ENCODE measurements at regions of chr2 and their contacts with region 1.

Region 1: DNA sequence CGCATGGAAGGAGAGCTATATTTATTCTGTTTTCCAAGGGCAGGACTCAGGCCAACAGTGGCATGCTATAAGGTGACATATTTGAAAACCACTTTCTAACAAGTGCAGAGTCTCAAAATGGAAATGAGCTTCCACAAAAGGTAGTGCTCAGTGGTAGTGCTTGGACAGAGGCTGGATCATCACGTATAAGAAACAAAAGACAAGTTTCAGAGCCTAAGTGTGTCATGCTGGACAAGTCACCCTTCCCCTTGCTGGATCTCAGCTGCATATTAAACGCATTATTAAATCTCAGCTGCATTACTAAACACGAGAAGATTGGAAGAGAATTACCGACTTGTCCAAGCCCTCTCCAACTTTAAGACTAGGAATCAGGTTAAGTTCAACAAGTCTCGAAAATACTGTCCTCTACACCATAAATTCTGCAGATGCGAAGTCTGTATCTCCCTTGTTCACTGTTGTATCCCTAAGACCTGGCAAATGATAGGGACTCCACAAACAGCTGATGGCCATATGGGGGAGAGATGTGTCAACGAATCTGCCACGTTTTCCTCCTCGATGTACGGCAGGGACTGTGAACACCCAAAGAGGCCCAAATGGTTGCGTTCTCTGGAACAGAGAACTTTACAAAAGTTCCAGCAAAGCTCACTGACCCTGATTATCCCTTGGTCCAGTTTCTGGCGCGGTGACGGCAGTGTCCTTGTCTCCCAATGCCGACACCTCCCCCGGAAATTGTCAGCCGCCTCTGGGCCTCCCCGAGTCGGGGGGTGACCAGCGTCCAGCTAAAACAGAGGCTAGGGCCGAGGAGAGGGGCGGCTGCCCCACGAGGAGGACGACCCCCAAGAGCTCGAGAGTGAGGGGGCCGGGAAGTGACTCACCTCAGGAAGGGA is 611 bp downstream of the NOL10 start:
- DNase-seq: no peak
- ATAC-seq: peak; percentile 19
- H3K4me3 Mint-ChIP-seq: no peak overlapping the region
- H3K27ac Mint-ChIP-seq: no peak overlapping the region
- H3K4me1 Mint-ChIP-seq: peaks cover 7% of the 10 kb centered on the region
- H3K27me3 Mint-ChIP-seq: no peaks in the 10 kb centered on the region

Region 2: GRCh38 chr2:10750610-10751009 is 61.4 kb after region 1 on chr2:
- CTCF ChIA-PET with region 1: no interaction called
- POLR2A ChIA-PET with region 1: no interaction called
- intact Hi-C with region 1: loop called in 1 of 2 experiments (anchors 1 kb)
- DNase-seq: no peak
- ATAC-seq: no peak
- H3K4me3 Mint-ChIP-seq: no peak overlapping the region
- H3K27ac Mint-ChIP-seq: no peak overlapping the region
- H3K4me1 Mint-ChIP-seq: peaks cover 3% of the 10 kb centered on the region
- H3K27me3 Mint-ChIP-seq: peaks cover 2% of the 10 kb centered on the region

Region 3: GRCh38 chr2:10790228-10790979 is 101.2 kb after region 1 on chr2:
- CTCF ChIA-PET with region 1: no interaction called
- POLR2A ChIA-PET with region 1: no interaction called
- intact Hi-C with region 1: loop called in 1 of 2 experiments (anchors 10 kb)
- DNase-seq: peak; percentile 53
- ATAC-seq: peak; percentile 84
- H3K4me3 Mint-ChIP-seq: peak overlapping the region; percentile 29
- H3K27ac Mint-ChIP-seq: peak overlapping the region; percentile 72
- H3K4me1 Mint-ChIP-seq: peaks cover 32% of the 10 kb centered on the region
- H3K27me3 Mint-ChIP-seq: no peaks in the 10 kb centered on the region

Measured in activated CD4-positive, alpha-beta T cell treated with anti-CD3 and anti-CD28 coated beads for 36 hours (primary cell).